Naive thymus-derived CD4-positive, alpha-beta T cell (primary cell): ENCODE measurements at regions of chr7 and their contacts with region 1.

Region 1: GRCh38 chr7:50304158-50304910 is at the start of gene IKZF1:
- DNase-seq: peak; percentile 38 to 75 (median 58)
- ATAC-seq: peak; percentile 54
- H3K4me3 ChIP-seq: peak within 1 kb of the TSS; percentile 84
- H3K4me3 Mint-ChIP-seq: peak within 1 kb of the TSS; percentile 93 to 100 (median 99)
- H3K27ac ChIP-seq: peak within 1 kb of the TSS; percentile 90
- H3K27ac Mint-ChIP-seq: peak within 1 kb of the TSS; percentile 91 to 100 (median 98)
- H3K4me1 ChIP-seq: peaks cover 13 to 33% of the 10 kb centered on the region in 2 donors
- H3K4me1 Mint-ChIP-seq: peaks cover 37 to 57% (median 53%) of the 10 kb centered on the region in 7 donors
- H3K27me3 ChIP-seq: no peaks in the 10 kb centered on the region
- H3K27me3 Mint-ChIP-seq: peaks cover 0 to 2% (median 0%) of the 10 kb centered on the region in 5 donors
- total RNA-seq, gene IKZF1: 388 to 548 (median 463) TPM

Region 2: DNA sequence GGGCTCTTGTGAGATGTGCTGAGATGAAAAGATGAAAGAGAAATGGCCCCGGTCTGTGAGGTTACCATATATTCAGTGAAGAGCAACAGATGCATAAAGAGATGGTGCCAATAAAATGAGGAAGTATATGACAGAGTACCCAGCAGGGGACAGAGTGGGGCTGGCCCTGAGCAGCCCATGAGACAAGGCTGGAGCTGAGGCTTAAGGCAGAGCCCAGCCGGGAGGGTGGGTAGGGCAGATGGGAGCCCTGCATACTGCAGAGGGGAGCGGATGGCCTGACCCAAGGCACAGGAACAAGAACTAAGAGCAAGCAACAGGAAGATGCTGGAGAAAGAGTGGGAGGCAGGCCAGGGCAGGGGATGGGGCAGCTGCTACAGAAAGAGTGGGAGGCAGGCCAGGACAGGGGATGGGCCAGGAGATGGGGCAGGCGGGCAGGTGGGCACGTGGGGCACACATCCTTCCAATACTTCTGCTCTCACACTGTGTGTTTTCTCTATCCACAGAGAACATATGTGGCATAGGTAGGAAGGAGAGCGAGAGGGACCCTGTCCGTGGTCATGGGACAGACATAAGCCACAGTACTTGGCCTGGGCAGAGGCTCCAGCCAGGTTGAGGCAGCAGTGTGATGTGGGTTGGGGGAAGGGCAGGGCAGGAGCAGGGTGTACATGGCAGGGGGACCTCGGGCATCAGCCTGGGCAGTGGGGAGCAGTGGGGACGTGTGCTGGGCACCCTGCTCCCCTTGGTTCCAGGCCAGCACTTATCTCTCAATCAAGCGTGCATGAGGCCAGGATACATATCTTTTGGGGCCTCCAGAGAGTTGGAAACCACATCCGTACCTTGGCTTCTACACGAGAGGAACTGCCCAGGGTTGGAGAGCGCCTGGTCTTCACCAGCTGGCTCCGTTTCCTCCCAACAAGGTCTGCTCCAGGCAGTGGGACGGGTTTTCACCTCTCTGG is 91.4 kb before region 1 on chr7:
- CTCF ChIA-PET with region 1: interaction called, 147 read pairs
- POLR2A ChIA-PET with region 1: interaction called, 416 read pairs
- intact Hi-C with region 1: no loop called
- DNase-seq: peak in 5 of 9 donors; percentile 24 to 49 (median 41)
- ATAC-seq: peak; percentile 63
- H3K4me3 ChIP-seq: no peak overlapping the region
- H3K4me3 Mint-ChIP-seq: peak overlapping the region; percentile 44 to 89 (median 68)
- H3K27ac ChIP-seq: no peak overlapping the region
- H3K27ac Mint-ChIP-seq: peak overlapping the region; percentile 26 to 94 (median 83)
- H3K4me1 ChIP-seq: peaks cover 17 to 86% of the 10 kb centered on the region in 2 donors
- H3K4me1 Mint-ChIP-seq: peaks cover 69 to 100% (median 98%) of the 10 kb centered on the region in 7 donors
- H3K27me3 ChIP-seq: no peaks in the 10 kb centered on the region
- H3K27me3 Mint-ChIP-seq: no peaks in the 10 kb centered on the region

Region 3: GRCh38 chr7:50293509-50294179 is 10.7 kb before region 1 on chr7:
- CTCF ChIA-PET with region 1: no interaction called
- POLR2A ChIA-PET with region 1: interaction called, 10 read pairs
- intact Hi-C with region 1: loop called in 1 of 2 experiments (anchors 1 kb)
- DNase-seq: no peak
- ATAC-seq: no peak
- H3K4me3 ChIP-seq: no peak overlapping the region
- H3K4me3 Mint-ChIP-seq: no peak overlapping the region
- H3K27ac ChIP-seq: no peak overlapping the region
- H3K27ac Mint-ChIP-seq: peak overlapping the region in 1 of 9 donors; percentile 26
- H3K4me1 ChIP-seq: peaks cover 0 to 9% of the 10 kb centered on the region in 2 donors
- H3K4me1 Mint-ChIP-seq: peaks cover 15 to 65% (median 43%) of the 10 kb centered on the region in 7 donors
- H3K27me3 ChIP-seq: no peaks in the 10 kb centered on the region
- H3K27me3 Mint-ChIP-seq: peaks cover 0 to 7% (median 0%) of the 10 kb centered on the region in 5 donors

Region 4: GRCh38 chr7:50335795-50336754 is 31.7 kb after region 1 on chr7:
- CTCF ChIA-PET with region 1: interaction called, 6 read pairs
- POLR2A ChIA-PET with region 1: interaction called, 2,368 read pairs
- intact Hi-C with region 1: loop called (anchors 1 kb)
- DNase-seq: peak in 6 of 9 donors; percentile 54 to 86 (median 60)
- ATAC-seq: peak; percentile 62
- H3K4me3 ChIP-seq: peak overlapping the region; percentile 29
- H3K4me3 Mint-ChIP-seq: peak overlapping the region in 1 of 10 donors; percentile 90
- H3K27ac ChIP-seq: peak overlapping the region; percentile 93
- H3K27ac Mint-ChIP-seq: no peak overlapping the region
- H3K4me1 ChIP-seq: peaks cover 99% of the 10 kb centered on the region in 2 donors
- H3K4me1 Mint-ChIP-seq: peaks cover 0 to 68% (median 17%) of the 10 kb centered on the region in 7 donors
- H3K27me3 ChIP-seq: no peaks in the 10 kb centered on the region
- H3K27me3 Mint-ChIP-seq: no peaks in the 10 kb centered on the region

Region 5: DNA sequence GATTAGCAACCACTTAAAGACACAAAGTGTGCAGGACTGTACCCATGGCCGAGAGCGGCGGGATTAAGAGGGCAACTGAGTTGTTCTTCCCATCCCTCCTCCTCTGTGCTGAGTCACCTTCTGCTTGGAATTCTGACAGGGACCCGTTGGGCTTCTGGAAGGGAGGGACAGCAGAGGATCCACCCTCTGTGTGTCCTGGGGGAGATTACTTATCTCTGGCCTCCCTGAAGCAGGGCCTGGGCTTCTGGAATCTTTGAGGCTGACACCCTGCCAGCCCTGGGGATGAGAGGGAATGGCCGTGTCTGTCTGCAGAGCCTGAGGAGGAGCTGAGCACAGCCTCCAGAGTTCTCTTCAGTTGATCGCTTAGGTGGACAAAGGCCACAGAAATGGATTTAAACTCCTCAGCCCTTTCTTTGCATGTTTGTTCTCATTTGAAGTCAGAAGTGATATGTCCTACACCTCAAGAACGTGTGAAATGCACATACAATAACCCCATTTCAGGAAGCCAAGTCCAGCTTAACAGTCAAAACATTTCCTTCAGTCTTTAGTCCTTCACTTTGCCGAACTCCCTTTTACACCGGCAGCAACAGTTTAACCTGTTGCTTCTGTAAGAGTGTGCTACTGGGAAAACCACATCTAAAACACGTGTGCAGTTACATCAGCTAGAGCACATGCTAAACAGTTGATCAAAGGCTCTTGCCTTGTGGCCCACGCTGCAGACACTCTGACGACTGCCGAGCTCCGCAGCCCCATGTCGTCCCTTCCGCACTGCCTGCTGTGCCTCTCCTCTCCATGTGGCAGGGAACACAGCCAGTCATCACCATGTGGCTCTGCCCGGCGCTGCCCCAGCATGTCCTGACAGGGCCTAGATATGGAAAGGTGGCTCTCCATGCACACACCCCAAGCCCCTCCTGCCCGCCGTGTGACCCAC is 55.9 kb after region 1 on chr7:
- CTCF ChIA-PET with region 1: interaction called, 210 read pairs
- POLR2A ChIA-PET with region 1: interaction called, 2,368 read pairs
- intact Hi-C with region 1: loop called (anchors 1 to 2 kb)
- DNase-seq: peak; percentile 58 to 93 (median 88)
- ATAC-seq: peak; percentile 92
- H3K4me3 ChIP-seq: peak overlapping the region; percentile 5
- H3K4me3 Mint-ChIP-seq: peak overlapping the region; percentile 73 to 89 (median 78)
- H3K27ac ChIP-seq: peak overlapping the region; percentile 94
- H3K27ac Mint-ChIP-seq: peak overlapping the region in 6 of 9 donors; percentile 91 to 100 (median 100)
- H3K4me1 ChIP-seq: peaks cover 95 to 98% of the 10 kb centered on the region in 2 donors
- H3K4me1 Mint-ChIP-seq: peaks cover 86 to 100% (median 97%) of the 10 kb centered on the region in 7 donors
- H3K27me3 ChIP-seq: no peaks in the 10 kb centered on the region
- H3K27me3 Mint-ChIP-seq: no peaks in the 10 kb centered on the region

Region 6: DNA sequence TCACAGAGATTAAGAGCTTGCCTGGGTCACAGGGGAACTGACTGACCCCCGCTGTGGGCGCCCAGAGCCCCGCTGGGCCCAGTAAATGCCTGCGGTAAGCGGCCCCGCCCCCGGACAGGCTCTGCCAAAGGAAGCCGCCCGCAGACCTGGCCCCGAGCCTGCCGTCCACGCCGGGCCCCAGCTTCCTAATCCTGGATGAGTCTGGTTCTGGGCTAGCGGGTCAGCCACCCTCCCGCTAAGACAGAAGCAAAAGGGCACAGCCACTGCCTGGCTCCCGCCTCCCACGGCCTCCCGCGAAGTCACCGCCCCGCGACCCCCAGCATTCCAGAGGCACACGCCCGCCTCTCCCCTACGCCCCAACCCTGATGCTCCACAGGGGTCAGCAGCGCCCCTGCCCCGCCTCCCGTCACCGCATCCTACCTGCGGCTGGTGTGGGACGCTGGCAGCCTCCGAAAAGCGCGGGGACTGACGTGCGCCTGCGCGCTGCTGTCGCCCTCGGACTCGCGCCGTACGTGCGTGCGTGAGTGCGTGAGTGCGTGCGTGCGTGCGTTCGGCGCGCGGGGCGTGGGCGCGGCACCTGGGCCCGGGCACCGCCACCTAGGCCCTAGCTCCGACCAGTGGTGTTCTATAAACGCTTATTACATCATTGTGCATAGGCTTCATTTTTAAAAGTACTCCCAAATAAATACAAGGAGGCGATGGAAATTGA is 145.7 kb after region 1 on chr7 and contains the start of gene FIGNL1:
- CTCF ChIA-PET with region 1: no interaction called
- POLR2A ChIA-PET with region 1: no interaction called
- intact Hi-C with region 1: loop called in 1 of 2 experiments (anchors 5 kb)
- DNase-seq: peak; percentile 61 to 87 (median 84)
- ATAC-seq: peak; percentile 98
- H3K4me3 ChIP-seq: peak within 1 kb of the TSS; percentile 63
- H3K4me3 Mint-ChIP-seq: peak within 1 kb of the TSS; percentile 91 to 96 (median 94)
- H3K27ac ChIP-seq: peak within 1 kb of the TSS; percentile 94
- H3K27ac Mint-ChIP-seq: peak within 1 kb of the TSS; percentile 92 to 99 (median 96)
- H3K4me1 ChIP-seq: peaks cover 13 to 14% of the 10 kb centered on the region in 2 donors
- H3K4me1 Mint-ChIP-seq: peaks cover 14 to 43% (median 29%) of the 10 kb centered on the region in 7 donors
- H3K27me3 ChIP-seq: no peaks in the 10 kb centered on the region
- H3K27me3 Mint-ChIP-seq: peaks cover 0 to 11% (median 0%) of the 10 kb centered on the region in 5 donors
- total RNA-seq, gene FIGNL1: 7.7 to 30.2 (median 14.3) TPM